ENCODE measurements at regions of chr1 and their contacts with region 1.

Region 1: DNA sequence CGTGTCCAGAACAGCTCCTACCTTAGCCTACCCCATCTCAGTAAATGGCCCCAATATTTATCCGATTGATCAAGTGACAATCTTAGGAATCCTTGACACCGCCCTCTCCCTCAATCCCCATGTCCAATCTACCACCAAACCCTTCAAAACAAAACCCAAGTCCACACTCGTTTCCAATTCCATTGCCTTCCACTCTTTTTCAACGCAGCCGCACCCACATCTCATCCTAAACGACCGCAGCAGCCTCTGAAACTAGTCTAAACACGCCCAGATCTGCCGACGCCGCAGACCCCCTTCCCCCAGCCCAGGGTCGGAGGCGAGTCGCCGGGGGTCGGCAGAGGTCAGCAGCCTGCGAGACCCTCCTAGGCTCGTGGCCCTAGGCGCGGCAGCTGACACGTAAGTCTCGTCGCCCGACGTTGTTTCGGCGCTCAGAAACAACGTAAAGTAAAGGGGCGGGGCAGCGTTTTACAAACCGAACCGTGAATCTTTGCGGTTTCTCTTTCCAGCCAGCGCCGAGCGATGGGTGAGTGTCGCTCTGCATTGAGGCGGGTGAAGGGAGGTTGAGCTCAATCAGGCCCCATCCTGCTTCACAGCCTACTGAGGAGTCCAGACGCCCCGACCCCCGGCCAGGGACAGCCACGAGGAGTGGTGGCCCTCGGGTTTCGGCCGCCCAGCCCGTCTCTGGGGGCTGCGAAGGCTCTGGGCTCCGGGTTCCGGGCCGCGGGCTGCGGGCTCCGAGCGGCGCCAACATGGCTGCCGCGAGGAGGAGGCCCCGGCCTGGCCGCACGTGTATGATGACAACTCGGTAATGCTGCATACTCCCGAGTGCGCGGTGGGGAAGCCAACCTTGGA is at the start of gene RPS8:
- DNase-seq: peak; percentile 83 to 95 (median 91)
- H3K4me3 ChIP-seq: peak within 1 kb of the TSS; percentile 60 to 99 (median 89)
- H3K27ac ChIP-seq: peak within 1 kb of the TSS; percentile 43 to 98 (median 91)
- H3K27me3 ChIP-seq: no peaks in the 10 kb centered on the region
- CTCF ChIP-seq: peak in 32 of 56 donors; percentile 9 to 61 (median 26)
- total RNA-seq, gene RPS8: 313 to 628 (median 452) TPM

Region 2: DNA sequence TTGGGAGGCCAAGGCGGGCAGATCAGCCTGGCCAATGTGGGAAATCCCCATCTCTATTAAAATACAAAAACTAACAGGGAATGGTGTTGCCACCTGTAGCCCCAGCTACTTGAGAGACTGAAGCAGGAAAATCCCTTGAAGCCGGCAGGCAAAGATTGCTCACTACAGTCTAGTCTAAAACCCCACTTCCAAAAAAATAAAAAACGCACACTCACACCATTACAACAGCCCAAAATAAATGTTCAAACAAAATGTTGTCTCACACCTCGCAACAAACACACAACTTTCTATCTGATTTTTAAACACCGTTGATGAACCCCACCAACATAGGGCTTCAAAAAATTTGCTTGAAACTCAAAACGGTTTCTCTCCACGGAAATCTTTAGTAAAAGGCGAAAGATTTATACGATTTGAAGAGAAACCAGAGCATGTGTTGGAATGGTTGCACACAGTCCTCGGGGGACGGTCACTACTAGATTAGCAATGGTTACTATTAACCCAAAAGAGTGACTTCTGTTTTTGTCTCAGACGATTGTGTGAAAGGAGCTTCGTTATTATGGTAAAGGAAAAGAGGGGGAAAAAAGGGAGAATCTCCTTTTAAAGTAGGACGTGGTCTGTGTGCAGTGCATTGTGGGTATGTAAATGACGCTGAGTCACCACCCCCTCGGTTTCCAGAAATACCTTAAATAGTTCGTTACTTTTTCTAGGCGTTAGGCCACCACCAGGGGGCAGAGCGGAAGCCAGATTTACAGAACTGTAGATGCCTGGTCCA is 44.4 kb before region 1 on chr1 and contains the start of gene RNU5D-1:
- intact Hi-C with region 1: loop called (anchors 2 to 5 kb)
- DNase-seq: peak; percentile 83 to 99 (median 94)
- H3K4me3 ChIP-seq: peak within 1 kb of the TSS in 58 of 59 donors; percentile 11 to 62 (median 44)
- H3K27ac ChIP-seq: peak within 1 kb of the TSS; percentile 78 to 99 (median 96)
- H3K27me3 ChIP-seq: no peaks in the 10 kb centered on the region
- CTCF ChIP-seq: peak; percentile 72 to 97 (median 84)
- total RNA-seq, gene RNU5D-1: not detected

Region 3: GRCh38 chr1:44739361-44740178 is 35.7 kb before region 1 on chr1 and contains the start of gene KIF2C:
- intact Hi-C with region 1: loop called (anchors 1 to 5 kb)
- DNase-seq: peak; percentile 93 to 98 (median 96)
- H3K4me3 ChIP-seq: peak within 1 kb of the TSS; percentile 49 to 86 (median 68)
- H3K27ac ChIP-seq: peak within 1 kb of the TSS; percentile 11 to 96 (median 88)
- H3K27me3 ChIP-seq: no peaks in the 10 kb centered on the region
- CTCF ChIP-seq: peak in 50 of 56 donors; percentile 21 to 71 (median 48)
- total RNA-seq, gene KIF2C: 0.16 to 4.3 (median 0.91) TPM

Region 4: GRCh38 chr1:44799770-44800584 is 24.7 kb after region 1 on chr1 and contains the start of gene PLK3:
- intact Hi-C with region 1: no loop called
- DNase-seq: peak; percentile 95 to 99 (median 98)
- H3K4me3 ChIP-seq: peak within 1 kb of the TSS; percentile 47 to 96 (median 85)
- H3K27ac ChIP-seq: peak within 1 kb of the TSS; percentile 70 to 98 (median 94)
- H3K27me3 ChIP-seq: no peaks in the 10 kb centered on the region
- CTCF ChIP-seq: peak; percentile 55 to 96 (median 87)
- total RNA-seq, gene PLK3: 3.7 to 23.1 (median 11.1) TPM